Right ventricle myocardium inferior (tissue), 1 donor: ENCODE measurements at regions of chr18 and their contacts with region 1.

Region 1: DNA sequence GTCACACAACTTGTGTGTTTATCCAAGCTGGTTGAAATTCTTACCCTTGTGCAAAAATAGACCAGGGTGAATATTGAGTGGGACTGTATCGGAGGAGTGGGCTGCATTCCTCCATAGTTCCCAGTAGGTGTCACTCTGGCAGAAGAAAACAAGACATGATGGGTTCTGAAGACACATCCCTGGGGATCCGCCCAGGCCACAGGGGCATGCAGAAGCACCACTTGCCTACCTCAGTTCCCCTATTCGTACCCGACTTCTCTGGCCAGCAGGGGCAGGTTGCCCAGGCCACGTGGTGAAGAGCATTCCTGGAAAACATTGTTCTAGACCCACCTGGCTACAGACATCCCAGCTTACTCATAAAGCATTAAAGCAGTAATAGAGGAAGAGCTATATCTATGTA is 168.2 kb downstream of the FAM210A start:
- DNase-seq: no peak
- ATAC-seq: peak; percentile 84

Region 2: DNA sequence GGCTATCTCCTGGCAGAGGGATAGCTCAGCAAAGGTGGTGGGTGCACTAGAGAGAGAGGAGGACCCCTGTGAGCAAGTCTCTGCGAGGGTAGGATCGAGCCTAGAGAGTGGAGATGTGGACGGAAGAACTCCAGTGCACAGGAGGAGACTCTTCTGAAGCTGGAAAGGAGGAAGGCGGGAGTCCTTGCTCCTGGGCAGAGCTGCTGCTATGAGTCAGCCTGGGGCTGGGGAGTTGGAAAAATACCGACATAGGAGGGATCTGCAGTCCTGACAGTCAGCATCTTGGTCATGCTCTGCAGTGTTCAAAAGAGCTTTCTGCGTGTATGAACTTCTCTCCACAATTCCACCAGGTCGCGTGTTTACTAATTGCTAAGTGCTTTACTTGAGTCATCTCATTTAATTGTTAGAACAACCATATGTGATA is 105.7 kb before region 1 on chr18:
- intact Hi-C with region 1: no loop called
- DNase-seq: no peak
- ATAC-seq: peak; percentile 30

Region 3: DNA sequence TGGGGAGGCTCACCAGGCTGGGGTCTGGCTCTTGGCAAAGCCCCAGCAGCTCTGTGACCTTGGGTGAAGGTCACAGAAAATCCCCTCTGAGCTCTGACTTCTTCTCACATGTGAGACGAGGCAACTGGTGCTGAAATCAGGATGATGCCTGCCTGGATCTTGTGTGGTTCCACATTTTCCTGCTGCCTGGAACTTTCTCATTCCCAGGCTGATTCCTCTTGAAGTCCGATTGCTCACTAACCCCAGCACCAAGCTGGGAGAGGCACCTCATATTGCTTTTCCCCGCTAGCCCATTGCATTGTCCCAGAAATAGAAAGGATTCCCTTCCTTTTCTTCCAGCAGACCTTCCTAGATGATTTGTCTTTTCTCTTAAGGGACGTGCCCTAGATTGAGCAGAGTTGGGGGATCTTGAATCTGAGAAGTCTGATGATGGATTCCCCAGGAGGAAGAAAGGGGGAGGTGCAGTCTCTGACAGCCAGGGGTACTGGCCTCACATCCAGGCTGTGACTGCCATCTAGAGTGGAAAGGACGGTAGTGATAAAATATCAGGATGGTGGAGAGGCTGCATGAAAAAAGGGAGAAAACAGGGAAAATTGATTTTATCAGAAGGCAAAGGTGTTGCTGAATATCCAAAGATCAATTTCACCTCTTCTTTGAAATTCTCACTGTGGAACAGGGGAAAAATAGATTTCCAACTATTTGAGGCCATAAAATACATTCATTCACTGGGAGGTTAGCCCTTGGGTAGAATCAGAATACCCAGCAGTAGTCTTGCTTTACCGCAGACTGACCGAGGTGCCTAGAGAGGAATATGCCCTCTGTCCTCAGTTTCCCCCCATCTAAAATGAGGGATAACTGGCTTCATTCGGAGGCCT is 72.0 kb after region 1 on chr18:
- intact Hi-C with region 1: loop called (anchors 2 kb)
- DNase-seq: peak; percentile 50
- ATAC-seq: peak; percentile 84